ENCODE measurements at regions of chr1 and their contacts with region 1.

Region 1: GRCh38 chr1:248837794-248838356 is at the start of gene ZNF672:
- DNase-seq: peak; percentile 100
- H3K4me3 Mint-ChIP-seq: no peak within 1 kb of the TSS
- H3K27ac Mint-ChIP-seq: no peak within 1 kb of the TSS
- H3K4me1 Mint-ChIP-seq: peaks cover 20% of the 10 kb centered on the region
- H3K27me3 Mint-ChIP-seq: no peaks in the 10 kb centered on the region
- CTCF ChIP-seq: no peak
- total RNA-seq, gene ZNF672: 35.8 and 36.2 TPM in 2 replicates

Region 2: DNA sequence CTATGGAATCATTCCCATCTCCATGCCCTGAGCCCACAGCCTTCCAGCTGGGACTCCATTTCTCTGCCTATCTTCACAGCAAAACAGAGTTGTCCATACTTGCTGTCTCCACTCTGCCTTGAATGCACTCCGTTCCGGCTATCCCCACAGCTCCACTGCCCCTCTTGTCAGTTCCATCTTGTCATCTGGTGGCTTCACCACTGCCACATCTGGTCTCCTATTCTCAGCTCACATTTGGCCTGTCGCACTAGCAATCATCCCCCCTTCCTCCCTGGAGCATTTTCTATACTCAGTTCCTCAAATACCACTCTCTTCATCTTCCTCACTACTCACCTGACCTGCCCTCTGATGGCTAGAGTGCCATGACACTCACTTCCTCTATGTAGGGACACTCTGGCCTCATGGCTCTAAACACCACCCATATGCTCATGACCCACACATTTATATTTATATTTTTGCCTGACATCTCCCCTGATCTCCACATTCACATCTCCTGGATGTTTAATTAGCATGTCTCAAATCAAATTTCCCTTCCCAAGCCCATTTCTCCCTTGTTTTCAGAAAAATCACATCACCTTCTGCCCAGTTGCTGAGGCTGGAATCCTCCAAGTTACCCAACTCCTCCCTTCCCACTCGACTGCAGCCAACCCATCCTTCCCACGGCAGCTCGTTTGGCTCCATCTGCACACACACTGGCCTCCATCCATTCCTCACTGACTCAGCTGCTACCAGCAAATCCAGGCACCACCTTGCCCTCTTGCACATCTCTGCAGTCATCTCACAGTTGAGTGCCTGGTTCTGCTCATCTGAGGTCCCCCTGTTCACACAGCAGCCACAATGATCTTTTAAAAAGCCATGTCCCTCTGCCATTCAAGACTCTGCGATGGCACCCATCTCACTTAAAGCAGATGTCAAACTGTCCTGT is 14.9 kb after region 1 on chr1:
- CTCF ChIA-PET with region 1: interaction called, 44 read pairs
- POLR2A ChIA-PET with region 1: interaction called, 234 read pairs
- intact Hi-C with region 1: no loop called
- DNase-seq: no peak
- H3K4me3 Mint-ChIP-seq: no peak overlapping the region
- H3K27ac Mint-ChIP-seq: no peak overlapping the region
- H3K4me1 Mint-ChIP-seq: peaks cover 16% of the 10 kb centered on the region
- H3K27me3 Mint-ChIP-seq: no peaks in the 10 kb centered on the region
- CTCF ChIP-seq: no peak

Measured in MCF 10A (cell line).